GM12878 (cell line): ENCODE measurements at regions of chr4 and their contacts with region 1.

Region 1: DNA sequence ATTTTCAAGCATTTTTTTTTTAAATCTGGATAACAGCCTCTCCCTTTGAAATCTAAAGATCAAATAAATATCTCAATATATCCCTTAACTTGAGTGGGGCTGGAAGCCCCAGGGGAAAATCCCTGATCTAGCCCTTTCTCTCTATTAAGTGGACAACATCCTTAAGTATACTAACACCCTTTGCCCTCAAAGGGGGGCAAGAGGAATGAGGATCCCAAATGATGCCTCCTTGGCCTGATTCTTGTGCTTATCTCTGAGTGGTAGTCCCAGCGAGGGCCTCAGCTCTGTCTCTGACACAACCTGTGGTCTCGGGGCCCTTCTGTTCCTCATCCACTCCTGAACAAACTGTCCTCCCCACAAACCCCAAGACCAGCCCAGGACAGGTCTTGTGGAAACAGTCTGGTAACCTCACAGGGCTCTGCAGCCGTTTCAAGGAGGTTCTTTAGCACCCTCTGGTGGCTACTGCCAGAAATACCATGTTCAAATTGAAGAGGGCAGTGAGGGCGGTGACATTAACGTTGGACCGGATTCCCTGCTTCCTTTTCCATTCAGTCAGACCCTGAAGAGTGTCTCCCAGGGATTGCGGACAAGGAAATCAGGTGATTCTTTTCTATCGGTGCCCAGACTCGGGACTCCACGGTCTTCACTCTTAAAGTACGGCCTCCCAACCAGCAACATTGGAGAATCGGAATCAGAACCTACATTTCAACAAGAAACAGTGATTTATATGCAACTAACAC is 12.9 kb downstream of the CXCL13 start:
- DNase-seq: no peak
- ATAC-seq: peak; percentile 99
- H3K4me3 ChIP-seq: no peak overlapping the region
- H3K27ac ChIP-seq: no peak overlapping the region
- H3K4me1 ChIP-seq: no peaks in the 10 kb centered on the region
- H3K27me3 ChIP-seq: peaks cover 0 to 3% of the 10 kb centered on the region in 2 experiments; a peak in 1 of 4 replicates
- CTCF ChIP-seq: peak; percentile 81 to 88 (median 85)
- EP300 ChIP-seq: no peak
- POLR2A ChIP-seq: no peak
- RAD21 ChIP-seq: peak; percentile 88

Region 2: GRCh38 chr4:77240469-77241066 is 378.0 kb before region 1 on chr4:
- CTCF ChIA-PET with region 1: interaction called, 5 read pairs
- POLR2A ChIA-PET with region 1: no interaction called
- RAD21 ChIA-PET with region 1: no interaction called
- SMC1A ChIA-PET with region 1: no interaction called
- in situ Hi-C with region 1: no loop called
- intact Hi-C with region 1: loop called (anchors 5 kb)
- DNase-seq: no peak
- ATAC-seq: peak; percentile 99
- H3K4me3 ChIP-seq: no peak overlapping the region
- H3K27ac ChIP-seq: no peak overlapping the region
- H3K4me1 ChIP-seq: peaks cover 1% of the 10 kb centered on the region; the same call in 1 of the 2 replicates
- H3K27me3 ChIP-seq: no peaks in the 10 kb centered on the region; a peak in 2 of 4 replicates
- CTCF ChIP-seq: peak; percentile 78 to 87 (median 86)
- EP300 ChIP-seq: no peak
- POLR2A ChIP-seq: no peak
- RAD21 ChIP-seq: peak; percentile 83

Region 3: DNA sequence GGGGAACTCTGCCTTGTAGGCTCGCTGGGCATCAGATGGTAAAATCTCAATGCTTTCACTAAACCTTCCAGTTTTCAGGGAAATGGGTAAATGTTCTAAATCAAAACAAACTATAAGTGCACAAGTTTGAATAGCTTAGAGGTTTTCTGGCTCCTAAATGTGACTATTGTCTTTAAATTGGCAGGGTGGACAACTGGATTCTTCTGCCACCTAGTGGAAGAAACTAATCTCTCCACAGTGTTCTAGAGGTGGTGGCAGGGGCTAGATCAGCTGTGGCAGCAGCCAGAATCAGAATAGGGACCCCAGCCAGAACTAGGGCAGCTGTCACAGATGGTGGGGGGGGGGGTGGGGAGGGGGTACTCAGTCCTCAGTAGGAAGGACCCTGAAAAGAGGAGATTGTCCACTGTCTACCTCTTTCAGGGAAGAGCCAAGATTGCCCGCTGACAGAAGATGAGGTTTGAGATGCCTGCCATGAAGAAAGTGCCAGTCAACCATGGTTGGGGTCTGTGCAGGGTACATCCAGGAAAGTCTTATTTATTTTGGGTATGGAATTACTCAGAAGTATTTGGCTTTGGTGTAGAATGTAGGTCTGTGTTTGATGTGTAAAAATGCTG is 260.1 kb before region 1 on chr4:
- CTCF ChIA-PET with region 1: interaction called, 13 read pairs
- POLR2A ChIA-PET with region 1: no interaction called
- RAD21 ChIA-PET with region 1: no interaction called
- SMC1A ChIA-PET with region 1: no interaction called
- in situ Hi-C with region 1: no loop called
- intact Hi-C with region 1: no loop called
- DNase-seq: no peak
- ATAC-seq: peak; percentile 88
- H3K4me3 ChIP-seq: no peak overlapping the region
- H3K27ac ChIP-seq: no peak overlapping the region
- H3K4me1 ChIP-seq: no peaks in the 10 kb centered on the region; the same call in 1 of the 2 replicates
- H3K27me3 ChIP-seq: no peaks in the 10 kb centered on the region; a peak in 1 of 4 replicates
- CTCF ChIP-seq: peak; percentile 60 to 65 (median 60); a peak in 5 of 6 replicates
- EP300 ChIP-seq: no peak
- POLR2A ChIP-seq: no peak
- RAD21 ChIP-seq: peak; percentile 67

Region 4: GRCh38 chr4:77367638-77368037 is 250.9 kb before region 1 on chr4:
- CTCF ChIA-PET with region 1: interaction called, 13 read pairs
- POLR2A ChIA-PET with region 1: no interaction called
- RAD21 ChIA-PET with region 1: interaction called, 3 read pairs
- SMC1A ChIA-PET with region 1: interaction called, 4 read pairs
- in situ Hi-C with region 1: loop called (anchors 10 kb)
- intact Hi-C with region 1: loop called (anchors 5 kb)
- DNase-seq: no peak
- ATAC-seq: peak; percentile 25; the same call in 1 of the 3 replicates
- H3K4me3 ChIP-seq: no peak overlapping the region
- H3K27ac ChIP-seq: no peak overlapping the region
- H3K4me1 ChIP-seq: no peaks in the 10 kb centered on the region
- H3K27me3 ChIP-seq: no peaks in the 10 kb centered on the region; a peak in 2 of 4 replicates
- CTCF ChIP-seq: no peak
- EP300 ChIP-seq: no peak
- POLR2A ChIP-seq: no peak
- RAD21 ChIP-seq: no peak

Region 5: DNA sequence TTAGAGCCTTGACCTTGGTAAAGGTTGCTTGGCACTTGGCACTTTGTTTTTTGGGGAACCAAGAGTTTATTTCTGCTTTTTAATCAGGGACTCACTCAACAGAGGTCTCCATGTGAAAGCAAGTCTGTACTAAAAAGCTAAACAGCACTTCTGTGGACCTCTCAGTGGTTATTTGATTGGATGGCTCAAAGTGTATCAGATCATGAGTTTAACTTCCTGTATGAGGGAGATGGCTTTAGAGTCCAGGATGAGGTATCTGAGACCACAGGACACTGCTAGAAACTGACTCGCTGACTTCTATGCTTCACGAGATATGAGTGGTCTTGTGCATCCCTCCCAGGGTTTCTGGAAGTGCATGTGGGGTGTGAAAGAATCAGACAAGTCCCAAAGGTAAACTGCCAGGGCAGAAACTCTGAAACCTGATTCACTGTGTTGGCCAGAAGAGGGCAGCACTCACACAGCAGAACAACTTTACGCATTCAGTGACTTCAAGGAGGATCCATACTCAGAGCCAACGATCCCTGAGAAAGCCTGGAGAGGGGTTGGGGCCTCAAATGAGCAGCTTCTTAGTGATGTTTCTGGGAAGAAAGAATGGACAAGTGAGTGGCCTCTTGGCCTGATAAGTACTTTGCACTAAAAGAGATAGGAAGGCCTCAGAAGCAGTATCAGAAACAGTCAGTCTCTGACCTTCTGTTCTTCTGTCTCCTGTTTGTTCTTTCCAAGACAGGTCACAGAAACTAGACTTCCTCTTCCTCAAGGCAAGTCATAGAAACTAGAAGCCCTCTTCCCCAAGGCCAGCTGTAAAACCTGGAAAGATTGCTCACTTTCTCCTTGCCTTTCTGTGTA is 233.2 kb before region 1 on chr4:
- CTCF ChIA-PET with region 1: interaction called, 13 read pairs
- POLR2A ChIA-PET with region 1: no interaction called
- RAD21 ChIA-PET with region 1: interaction called, 3 read pairs
- SMC1A ChIA-PET with region 1: interaction called, 5 read pairs
- in situ Hi-C with region 1: no loop called
- intact Hi-C with region 1: loop called (anchors 1 kb)
- DNase-seq: peak; percentile 15
- ATAC-seq: peak; percentile 93
- H3K4me3 ChIP-seq: no peak overlapping the region
- H3K27ac ChIP-seq: no peak overlapping the region
- H3K4me1 ChIP-seq: no peaks in the 10 kb centered on the region
- H3K27me3 ChIP-seq: no peaks in the 10 kb centered on the region
- CTCF ChIP-seq: peak; percentile 84 to 85 (median 84)
- EP300 ChIP-seq: no peak
- POLR2A ChIP-seq: no peak
- RAD21 ChIP-seq: peak; percentile 89

Region 6: GRCh38 chr4:77465271-77465670 is 153.3 kb before region 1 on chr4:
- CTCF ChIA-PET with region 1: interaction called, 5 read pairs
- POLR2A ChIA-PET with region 1: no interaction called
- RAD21 ChIA-PET with region 1: no interaction called
- SMC1A ChIA-PET with region 1: interaction called, 7 read pairs
- in situ Hi-C with region 1: no loop called
- intact Hi-C with region 1: loop called (anchors 5 kb)
- DNase-seq: no peak
- ATAC-seq: no peak
- H3K4me3 ChIP-seq: no peak overlapping the region
- H3K27ac ChIP-seq: no peak overlapping the region
- H3K4me1 ChIP-seq: no peaks in the 10 kb centered on the region
- H3K27me3 ChIP-seq: no peaks in the 10 kb centered on the region
- CTCF ChIP-seq: peak in 2 of 3 experiments; percentile 28 to 36; a peak in 3 of 6 replicates
- EP300 ChIP-seq: no peak
- POLR2A ChIP-seq: no peak
- RAD21 ChIP-seq: peak; percentile 55

Region 7: GRCh38 chr4:77629885-77630284 is 11.3 kb after region 1 on chr4:
- CTCF ChIA-PET with region 1: interaction called, 13 read pairs
- POLR2A ChIA-PET with region 1: no interaction called
- RAD21 ChIA-PET with region 1: interaction called, 3 read pairs
- SMC1A ChIA-PET with region 1: interaction called, 10 read pairs
- in situ Hi-C with region 1: no loop called
- intact Hi-C with region 1: no loop called
- DNase-seq: no peak
- ATAC-seq: peak; percentile 78
- H3K4me3 ChIP-seq: no peak overlapping the region
- H3K27ac ChIP-seq: no peak overlapping the region
- H3K4me1 ChIP-seq: no peaks in the 10 kb centered on the region
- H3K27me3 ChIP-seq: no peaks in the 10 kb centered on the region
- CTCF ChIP-seq: no peak
- EP300 ChIP-seq: 0 out of 4 replicates have a peak, but pooled peaks of 1 of the 2 experiments have one; percentile 41
- POLR2A ChIP-seq: no peak
- RAD21 ChIP-seq: no peak